ENCODE measurements at regions of chr18 and their contacts with region 1.

Region 1: DNA sequence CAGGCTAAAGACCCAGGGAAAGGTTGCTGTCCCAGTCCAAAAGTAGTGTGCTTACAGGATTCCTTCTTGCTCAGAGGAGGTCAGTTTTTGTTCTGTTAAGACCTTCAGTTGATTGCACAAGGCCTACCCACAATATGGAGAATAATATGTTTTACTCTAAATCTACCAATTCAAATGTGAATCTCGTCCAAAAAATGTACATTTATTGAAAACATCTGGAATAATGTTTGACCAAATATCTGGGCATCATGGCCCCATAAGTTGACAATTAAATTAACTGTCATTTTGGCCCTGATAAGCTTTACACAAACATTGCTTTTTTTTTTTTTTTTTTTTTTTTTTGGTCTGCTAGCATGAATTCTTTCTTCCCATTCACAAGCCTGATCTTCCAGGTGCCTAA is 109.8 kb downstream of the CCDC178 start:
- DNase-seq: no peak
- H3K4me3 ChIP-seq: no peak overlapping the region
- H3K27ac ChIP-seq: no peak overlapping the region
- H3K4me1 ChIP-seq: no peaks in the 10 kb centered on the region
- H3K27me3 ChIP-seq: no peaks in the 10 kb centered on the region
- CTCF ChIP-seq: no peak
- POLR2A ChIP-seq: no peak

Region 2: DNA sequence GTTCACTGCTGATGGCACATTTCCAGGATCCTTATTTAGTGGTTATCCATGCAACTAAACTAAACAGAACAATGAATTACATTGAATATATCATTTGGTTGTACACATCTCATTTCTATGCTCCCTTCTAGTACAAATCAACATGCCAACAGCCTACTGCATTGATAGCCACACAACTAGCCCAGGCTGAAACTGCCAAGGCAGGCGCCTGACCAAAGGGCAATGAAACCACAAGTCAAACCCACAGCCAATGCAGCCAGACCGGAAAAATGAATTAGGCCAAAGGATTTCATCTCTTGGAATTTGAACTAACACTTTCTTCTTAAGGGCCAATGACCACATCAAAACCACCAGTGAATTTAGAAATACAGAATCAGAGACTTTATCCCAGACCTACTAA is 697.6 kb after region 1 on chr18:
- intact Hi-C with region 1: loop called (anchors 5 kb)
- DNase-seq: no peak
- H3K4me3 ChIP-seq: no peak overlapping the region
- H3K27ac ChIP-seq: no peak overlapping the region
- H3K4me1 ChIP-seq: no peaks in the 10 kb centered on the region
- H3K27me3 ChIP-seq: no peaks in the 10 kb centered on the region
- CTCF ChIP-seq: no peak
- POLR2A ChIP-seq: no peak

Measured in breast epithelium (tissue), 4 donors.